WTC11 (cell line): ENCODE measurements at regions of chr7 and their contacts with region 1.

Region 1: GRCh38 chr7:88243345-88243909 is 23.6 kb upstream of the SRI start:
- DNase-seq: no peak
- ATAC-seq: peak; percentile 92
- H3K4me3 Mint-ChIP-seq: no peak overlapping the region
- H3K27ac Mint-ChIP-seq: no peak overlapping the region
- H3K4me1 Mint-ChIP-seq: peaks cover 5% of the 10 kb centered on the region
- H3K27me3 Mint-ChIP-seq: no peaks in the 10 kb centered on the region
- CTCF ChIP-seq: peak; percentile 60

Region 2: DNA sequence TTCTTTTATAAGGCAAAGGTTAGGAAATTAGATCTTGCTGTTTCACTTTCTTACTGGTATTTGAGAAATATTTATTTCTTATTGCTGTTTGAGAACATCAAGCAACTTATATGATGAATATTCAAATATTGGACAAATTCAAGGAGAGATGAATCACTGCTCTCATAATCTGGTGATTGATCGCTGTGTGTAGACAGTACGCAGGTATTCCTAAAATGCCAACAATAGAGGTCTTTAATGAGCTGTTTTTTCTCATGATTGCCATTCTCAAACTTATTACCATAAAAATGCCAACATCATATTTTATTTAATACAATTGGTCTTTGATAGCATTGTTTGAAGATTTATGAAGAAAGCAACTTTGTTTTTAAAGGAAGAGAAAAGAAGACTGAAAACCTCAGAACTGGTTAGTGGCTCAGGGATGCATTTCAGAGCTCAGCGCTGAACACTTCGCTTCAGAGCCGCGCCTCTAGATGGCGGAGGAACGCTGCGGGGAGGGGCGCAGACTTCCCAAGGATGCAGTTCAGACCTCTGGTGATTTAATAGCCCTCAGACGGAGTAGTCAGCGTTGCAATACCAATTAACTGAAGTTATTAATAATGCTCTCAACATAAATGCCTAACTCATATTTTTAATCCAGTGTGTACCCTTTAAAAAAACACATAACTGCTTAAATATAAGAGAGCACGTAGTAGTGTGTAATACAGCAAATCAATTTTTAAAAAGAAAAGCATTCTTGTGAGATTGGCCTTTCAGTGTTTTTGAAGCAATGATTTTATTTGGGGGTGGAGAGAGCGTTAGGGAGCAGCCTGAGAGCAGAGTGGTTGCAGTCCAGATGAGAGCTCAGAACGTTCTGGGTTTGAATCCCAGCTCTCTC is 101.8 kb after region 1 on chr7:
- CTCF ChIA-PET with region 1: interaction called, 25 read pairs
- POLR2A ChIA-PET with region 1: no interaction called
- DNase-seq: peak; percentile 67
- ATAC-seq: peak; percentile 97
- H3K4me3 Mint-ChIP-seq: no peak overlapping the region
- H3K27ac Mint-ChIP-seq: no peak overlapping the region
- H3K4me1 Mint-ChIP-seq: peaks cover 30% of the 10 kb centered on the region
- H3K27me3 Mint-ChIP-seq: no peaks in the 10 kb centered on the region
- CTCF ChIP-seq: no peak

Region 3: GRCh38 chr7:88357781-88358525 is 114.5 kb after region 1 on chr7:
- CTCF ChIA-PET with region 1: interaction called, 17 read pairs
- POLR2A ChIA-PET with region 1: no interaction called
- DNase-seq: no peak
- ATAC-seq: peak; percentile 34; the same call in 1 of the 2 replicates
- H3K4me3 Mint-ChIP-seq: no peak overlapping the region
- H3K27ac Mint-ChIP-seq: no peak overlapping the region
- H3K4me1 Mint-ChIP-seq: peaks cover 13% of the 10 kb centered on the region
- H3K27me3 Mint-ChIP-seq: no peaks in the 10 kb centered on the region
- CTCF ChIP-seq: no peak

Region 4: GRCh38 chr7:88835147-88835728 is 591.8 kb after region 1 on chr7:
- CTCF ChIA-PET with region 1: interaction called, 21 read pairs
- POLR2A ChIA-PET with region 1: no interaction called
- DNase-seq: no peak
- ATAC-seq: peak; percentile 68
- H3K4me3 Mint-ChIP-seq: no peak overlapping the region
- H3K27ac Mint-ChIP-seq: no peak overlapping the region
- H3K4me1 Mint-ChIP-seq: no peaks in the 10 kb centered on the region
- H3K27me3 Mint-ChIP-seq: no peaks in the 10 kb centered on the region
- CTCF ChIP-seq: peak; percentile 30; the same call in 1 of the 2 replicates